ENCODE measurements at regions of chr2 and their contacts with region 1.

Region 1: DNA sequence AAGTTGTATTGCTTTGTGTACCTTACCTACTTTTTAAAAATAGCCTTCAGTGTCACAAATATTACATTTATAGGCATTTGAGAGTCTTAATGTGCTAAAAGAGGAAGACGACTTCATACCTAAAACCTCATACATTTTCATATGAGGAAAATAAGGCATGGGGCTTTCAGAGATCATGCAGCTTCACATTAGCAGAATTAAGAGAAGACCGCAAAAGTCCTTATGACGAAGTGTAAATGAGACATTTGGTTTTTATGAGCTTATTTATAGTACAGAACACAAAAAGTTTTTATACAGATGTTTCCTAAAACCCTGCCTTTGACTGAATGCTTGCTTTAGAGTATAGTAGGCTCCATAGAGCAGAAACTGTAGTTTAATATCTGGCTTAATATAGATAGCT is 10.1 kb upstream of the CCDC138 start:
- DNase-seq: peak; percentile 62
- ATAC-seq: peak; percentile 93
- H3K4me3 ChIP-seq: no peak overlapping the region
- H3K27ac ChIP-seq: peak overlapping the region; percentile 74
- H3K4me1 ChIP-seq: peaks cover 19% of the 10 kb centered on the region
- H3K27me3 ChIP-seq: no peaks in the 10 kb centered on the region
- CTCF ChIP-seq: no peak
- EP300 ChIP-seq: peak; percentile 93 to 95; a peak in 3 of 4 replicates
- POLR2A ChIP-seq: no peak
- RAD21 ChIP-seq: no peak

Region 2: DNA sequence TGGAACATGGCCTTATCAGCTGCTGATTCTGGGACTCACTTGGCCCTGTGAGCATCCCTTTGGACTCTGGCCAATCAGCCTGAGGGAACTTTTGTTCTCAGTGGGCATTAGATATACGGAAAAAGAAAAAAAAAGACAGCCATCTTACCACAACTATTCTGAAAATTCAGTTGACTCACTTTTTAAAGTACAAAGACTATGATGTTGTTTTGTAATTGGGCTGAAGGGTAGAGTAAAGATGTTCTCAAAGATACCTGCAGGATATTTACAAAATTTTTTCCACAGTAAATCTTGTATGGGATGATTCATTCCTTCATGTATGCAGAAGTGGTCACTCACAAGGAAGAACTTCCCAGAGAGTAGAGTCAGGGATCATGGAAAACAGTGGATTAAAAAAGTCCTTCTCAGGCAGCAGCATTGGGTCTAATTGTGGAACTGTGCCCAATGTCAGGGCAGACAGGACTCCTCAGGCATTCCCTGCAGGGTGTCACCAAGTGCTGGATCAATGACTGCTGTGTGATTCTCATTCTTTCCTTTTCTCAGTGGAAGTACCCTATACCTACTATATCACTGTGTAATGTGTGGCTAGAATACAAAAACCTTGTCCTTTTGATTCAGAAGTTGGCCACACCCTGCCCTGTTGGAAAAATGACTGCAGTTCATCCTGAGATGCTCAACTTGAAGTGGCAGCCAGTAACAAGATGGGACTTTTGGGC is 363.3 kb before region 1 on chr2:
- CTCF ChIA-PET with region 1: no interaction called
- POLR2A ChIA-PET with region 1: no interaction called
- RAD21 ChIA-PET with region 1: no interaction called
- SMC1A ChIA-PET with region 1: no interaction called
- in situ Hi-C with region 1: no loop called
- intact Hi-C with region 1: no loop called
- DNase-seq: no peak
- ATAC-seq: no peak
- H3K4me3 ChIP-seq: no peak overlapping the region
- H3K27ac ChIP-seq: no peak overlapping the region
- H3K4me1 ChIP-seq: no peaks in the 10 kb centered on the region
- H3K27me3 ChIP-seq: no peaks in the 10 kb centered on the region
- CTCF ChIP-seq: no peak
- EP300 ChIP-seq: no peak
- POLR2A ChIP-seq: no peak
- RAD21 ChIP-seq: no peak

Region 3: DNA sequence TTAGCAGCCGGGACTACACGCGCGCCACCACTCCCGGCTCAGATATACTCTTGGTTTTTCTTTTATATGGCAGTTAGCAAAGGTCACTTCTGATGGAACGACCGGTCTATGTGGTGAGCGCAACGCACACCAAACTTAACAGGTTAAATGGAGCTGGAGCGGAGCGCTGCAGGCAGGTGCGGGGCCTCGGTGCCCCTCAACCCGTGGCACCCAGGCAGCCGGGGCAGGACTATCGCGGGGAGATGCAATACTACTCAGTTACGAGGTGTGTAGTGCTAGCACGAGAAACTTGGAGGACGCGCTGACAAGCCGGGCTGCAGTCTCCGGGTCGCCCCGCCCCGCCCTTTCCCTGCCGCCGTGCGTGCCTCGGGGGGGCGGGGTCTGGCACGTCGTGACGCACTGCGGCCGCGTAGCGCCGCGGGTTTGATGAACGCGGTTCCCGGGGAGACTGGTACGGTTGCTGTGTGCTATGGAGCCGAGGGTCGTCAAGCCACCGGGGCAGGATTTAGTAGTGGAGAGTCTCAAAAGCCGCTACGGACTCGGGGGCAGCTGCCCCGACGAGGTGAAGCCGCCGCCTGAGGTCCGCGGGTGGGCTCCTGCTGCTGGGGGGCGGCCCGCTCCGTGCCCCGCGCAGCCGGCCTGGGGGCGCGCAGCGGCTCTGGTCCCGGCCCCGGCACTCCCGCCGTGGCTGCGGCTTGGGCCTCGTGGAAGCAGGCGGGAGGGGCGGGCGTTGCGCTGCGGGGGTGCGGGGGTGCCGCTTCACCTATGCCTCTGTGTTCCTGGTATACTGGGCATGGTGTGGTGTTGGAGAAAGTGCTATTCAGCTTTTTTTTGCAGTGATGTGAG is 10.1 kb after region 1 on chr2 and contains the start of gene CCDC138:
- CTCF ChIA-PET with region 1: interaction called, 6 read pairs
- POLR2A ChIA-PET with region 1: interaction called, 7 read pairs
- RAD21 ChIA-PET with region 1: interaction called, 11 read pairs
- SMC1A ChIA-PET with region 1: interaction called, 4 read pairs
- in situ Hi-C with region 1: no loop called
- intact Hi-C with region 1: no loop called
- DNase-seq: peak; percentile 35
- ATAC-seq: peak; percentile 97
- H3K4me3 ChIP-seq: peak within 1 kb of the TSS; percentile 92
- H3K27ac ChIP-seq: peak within 1 kb of the TSS; percentile 75
- H3K4me1 ChIP-seq: no peaks in the 10 kb centered on the region
- H3K27me3 ChIP-seq: no peaks in the 10 kb centered on the region
- CTCF ChIP-seq: no peak
- EP300 ChIP-seq: no peak
- POLR2A ChIP-seq: peak; percentile 85
- RAD21 ChIP-seq: no peak
- polyA plus RNA-seq, gene CCDC138: 13.6 to 16.9 TPM

Region 4: DNA sequence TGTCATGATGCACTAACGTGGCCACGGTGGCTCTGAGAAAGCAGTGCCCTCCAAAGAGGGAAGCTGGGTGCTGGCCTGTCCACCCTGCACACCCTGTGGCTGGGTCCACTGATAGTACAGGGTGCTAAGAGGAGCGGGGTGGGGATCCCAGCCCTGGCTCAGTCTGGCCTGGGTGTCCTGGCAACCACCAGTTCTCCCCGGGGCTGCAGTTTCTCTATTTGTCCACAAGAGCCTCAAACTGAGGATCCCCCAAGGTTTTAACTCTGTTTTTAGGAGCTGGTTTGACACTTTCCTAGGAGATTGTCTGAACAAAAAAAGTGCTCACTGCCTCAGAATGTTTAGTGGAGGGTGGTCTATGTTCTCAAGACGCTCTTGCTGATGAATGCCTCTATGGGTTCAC is 183.5 kb after region 1 on chr2:
- CTCF ChIA-PET with region 1: no interaction called
- POLR2A ChIA-PET with region 1: no interaction called
- RAD21 ChIA-PET with region 1: no interaction called
- SMC1A ChIA-PET with region 1: no interaction called
- in situ Hi-C with region 1: no loop called
- intact Hi-C with region 1: no loop called
- DNase-seq: no peak
- ATAC-seq: peak; percentile 58; the same call in 2 of the 3 replicates
- H3K4me3 ChIP-seq: no peak overlapping the region
- H3K27ac ChIP-seq: no peak overlapping the region
- H3K4me1 ChIP-seq: no peaks in the 10 kb centered on the region
- H3K27me3 ChIP-seq: peaks cover 0 to 3% of the 10 kb centered on the region in 2 experiments; a peak in 3 of 4 replicates
- CTCF ChIP-seq: peak in 1 of 3 experiments; percentile 17; a peak in 1 of 6 replicates
- EP300 ChIP-seq: no peak
- POLR2A ChIP-seq: no peak
- RAD21 ChIP-seq: no peak

Region 5: DNA sequence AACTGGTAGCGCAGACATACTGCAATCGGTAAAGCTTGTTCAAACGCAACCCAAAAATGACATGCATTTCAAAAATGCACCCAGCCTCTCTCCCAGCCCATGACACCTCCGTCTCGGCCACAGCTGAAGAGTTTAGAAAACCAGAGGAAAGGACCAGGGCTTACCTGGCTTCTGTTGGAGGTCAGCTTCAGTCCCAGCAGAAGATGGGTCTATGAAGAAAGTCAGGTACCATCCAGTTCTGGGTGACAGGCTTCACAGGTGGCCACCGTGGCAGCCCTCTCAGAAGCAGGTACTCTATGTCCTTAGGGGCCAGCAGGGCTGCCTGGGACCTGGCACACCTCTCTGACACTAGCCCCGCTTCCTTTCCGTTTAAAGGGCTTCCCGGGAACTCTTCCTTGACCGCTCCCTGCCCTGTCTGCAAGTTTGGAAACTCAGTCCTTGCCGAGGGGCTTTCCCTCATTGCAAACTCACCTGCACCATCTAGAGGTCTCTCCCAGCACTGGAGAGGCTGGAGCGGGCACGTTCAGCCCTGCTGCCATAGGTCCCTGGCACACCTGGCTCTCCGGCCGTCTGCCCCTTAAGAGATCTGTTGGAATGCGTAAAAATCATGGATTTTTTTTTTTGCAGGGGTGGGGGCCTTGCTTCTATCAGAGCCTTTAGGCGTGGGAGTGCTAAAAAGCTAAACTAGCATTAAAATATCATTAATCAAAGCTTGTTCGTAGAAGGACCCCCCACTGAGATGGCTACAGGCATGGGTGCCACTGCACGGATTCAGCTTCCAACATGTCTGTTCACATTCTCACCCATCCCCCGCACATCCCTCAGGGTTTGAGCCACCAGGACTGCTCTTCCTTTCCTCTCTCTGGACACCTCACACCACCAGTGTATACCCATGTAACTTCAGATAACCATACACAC is 212.6 kb after region 1 on chr2 and contains the start of gene EDAR:
- CTCF ChIA-PET with region 1: no interaction called
- POLR2A ChIA-PET with region 1: no interaction called
- RAD21 ChIA-PET with region 1: no interaction called
- SMC1A ChIA-PET with region 1: no interaction called
- in situ Hi-C with region 1: no loop called
- intact Hi-C with region 1: no loop called
- DNase-seq: no peak
- ATAC-seq: peak; percentile 93
- H3K4me3 ChIP-seq: no peak within 1 kb of the TSS
- H3K27ac ChIP-seq: no peak within 1 kb of the TSS
- H3K4me1 ChIP-seq: no peaks in the 10 kb centered on the region
- H3K27me3 ChIP-seq: peaks cover 0 to 1% of the 10 kb centered on the region in 2 experiments; a peak in 2 of 4 replicates
- CTCF ChIP-seq: peak; percentile 44 to 55 (median 52)
- EP300 ChIP-seq: no peak
- POLR2A ChIP-seq: no peak
- RAD21 ChIP-seq: peak; percentile 47; the same call in 1 of the 2 replicates
- polyA plus RNA-seq, gene EDAR: not detected

Measured in GM12878 (cell line).